H1 (cell line): ENCODE measurements at regions of chr2 and their contacts with region 1.

Region 1: GRCh38 chr2:236180831-236181453 is 12.8 kb upstream of the GBX2 start:
- DNase-seq: peak in 1 of 2 experiments; percentile 84
- H3K4me3 ChIP-seq: no peak overlapping the region
- H3K27ac ChIP-seq: no peak overlapping the region
- H3K4me1 ChIP-seq: peaks cover 0 to 3% (median 0%) of the 10 kb centered on the region in 4 experiments; a peak in 4 of 7 replicates
- H3K27me3 ChIP-seq: peaks cover 13 to 39% (median 31%) of the 10 kb centered on the region in 4 experiments
- CTCF ChIP-seq: peak; percentile 34 to 72 (median 65)
- EP300 ChIP-seq: no peak
- POLR2A ChIP-seq: no peak
- RAD21 ChIP-seq: peak; percentile 88 to 91

Region 2: GRCh38 chr2:235779444-235779896 is 401.5 kb before region 1 on chr2:
- CTCF ChIA-PET with region 1: interaction called, 50 read pairs
- POLR2A ChIA-PET with region 1: no interaction called
- DNase-seq: peak; percentile 71 to 93
- H3K4me3 ChIP-seq: no peak overlapping the region
- H3K27ac ChIP-seq: no peak overlapping the region
- H3K4me1 ChIP-seq: no peaks in the 10 kb centered on the region
- H3K27me3 ChIP-seq: no peaks in the 10 kb centered on the region
- CTCF ChIP-seq: peak; percentile 84 to 95 (median 95)
- EP300 ChIP-seq: no peak
- POLR2A ChIP-seq: no peak
- RAD21 ChIP-seq: peak; percentile 97 to 98

Region 3: GRCh38 chr2:235966396-235966795 is 214.5 kb before region 1 on chr2:
- CTCF ChIA-PET with region 1: interaction called, 10 read pairs
- POLR2A ChIA-PET with region 1: no interaction called
- DNase-seq: no peak
- H3K4me3 ChIP-seq: no peak overlapping the region
- H3K27ac ChIP-seq: no peak overlapping the region
- H3K4me1 ChIP-seq: peaks cover 0 to 2% (median 0%) of the 10 kb centered on the region in 4 experiments; a peak in 2 of 7 replicates
- H3K27me3 ChIP-seq: no peaks in the 10 kb centered on the region
- CTCF ChIP-seq: peak; percentile 36 to 66 (median 55)
- EP300 ChIP-seq: no peak
- POLR2A ChIP-seq: no peak
- RAD21 ChIP-seq: peak; percentile 27 to 55; a peak in 3 of 4 replicates

Region 4: DNA sequence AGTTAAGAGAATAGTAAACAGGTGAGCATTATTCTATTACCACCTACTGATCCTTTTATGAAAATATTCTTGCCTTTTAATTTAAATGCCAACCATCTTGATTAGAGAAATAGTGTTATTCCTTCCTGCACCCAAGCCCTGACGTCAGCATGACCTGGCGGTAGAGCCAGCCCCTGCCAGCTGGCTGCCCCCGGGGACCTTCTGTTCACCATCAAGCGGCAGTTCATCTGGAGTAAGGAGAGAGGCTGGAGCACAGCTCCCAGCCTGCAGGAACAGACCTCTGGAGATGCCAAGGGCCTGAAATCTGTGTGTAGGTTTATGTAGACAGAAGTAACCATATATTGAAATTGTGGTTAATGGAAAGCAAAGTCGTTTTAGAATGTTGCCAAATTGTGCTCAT is 184.5 kb before region 1 on chr2:
- CTCF ChIA-PET with region 1: interaction called, 10 read pairs
- POLR2A ChIA-PET with region 1: no interaction called
- DNase-seq: no peak
- H3K4me3 ChIP-seq: no peak overlapping the region
- H3K27ac ChIP-seq: no peak overlapping the region
- H3K4me1 ChIP-seq: peaks cover 0 to 7% (median 3%) of the 10 kb centered on the region in 4 experiments; a peak in 5 of 7 replicates
- H3K27me3 ChIP-seq: no peaks in the 10 kb centered on the region
- CTCF ChIP-seq: no peak
- EP300 ChIP-seq: no peak
- POLR2A ChIP-seq: no peak
- RAD21 ChIP-seq: no peak

Region 5: GRCh38 chr2:236086971-236087465 is 93.9 kb before region 1 on chr2:
- CTCF ChIA-PET with region 1: interaction called, 34 read pairs
- POLR2A ChIA-PET with region 1: no interaction called
- DNase-seq: peak; percentile 31 to 63
- H3K4me3 ChIP-seq: peak overlapping the region in 1 of 4 experiments; percentile 43; a peak in 2 of 8 replicates
- H3K27ac ChIP-seq: no peak overlapping the region
- H3K4me1 ChIP-seq: peaks cover 7 to 26% (median 22%) of the 10 kb centered on the region in 4 experiments
- H3K27me3 ChIP-seq: no peaks in the 10 kb centered on the region; a peak in 1 of 7 replicates
- CTCF ChIP-seq: no peak
- EP300 ChIP-seq: no peak
- POLR2A ChIP-seq: no peak
- RAD21 ChIP-seq: no peak

Region 6: GRCh38 chr2:236143811-236144210 is 37.1 kb before region 1 on chr2:
- CTCF ChIA-PET with region 1: interaction called, 51 read pairs
- POLR2A ChIA-PET with region 1: interaction called, 5 read pairs
- DNase-seq: no peak
- H3K4me3 ChIP-seq: no peak overlapping the region
- H3K27ac ChIP-seq: no peak overlapping the region
- H3K4me1 ChIP-seq: peaks cover 0 to 5% (median 4%) of the 10 kb centered on the region in 4 experiments; a peak in 5 of 7 replicates
- H3K27me3 ChIP-seq: peaks cover 0 to 6% (median 3%) of the 10 kb centered on the region in 4 experiments; a peak in 6 of 7 replicates
- CTCF ChIP-seq: no peak
- EP300 ChIP-seq: no peak
- POLR2A ChIP-seq: no peak
- RAD21 ChIP-seq: no peak

Region 7: GRCh38 chr2:236168110-236169067 is 12.6 kb before region 1 on chr2 and contains the start of gene GBX2:
- CTCF ChIA-PET with region 1: interaction called, 44 read pairs
- POLR2A ChIA-PET with region 1: interaction called, 7 read pairs
- DNase-seq: peak in 1 of 2 experiments; percentile 87
- H3K4me3 ChIP-seq: peak within 1 kb of the TSS; percentile 11 to 59 (median 26)
- H3K27ac ChIP-seq: no peak within 1 kb of the TSS
- H3K4me1 ChIP-seq: peaks cover 11 to 57% (median 36%) of the 10 kb centered on the region in 4 experiments
- H3K27me3 ChIP-seq: peaks cover 91 to 100% (median 97%) of the 10 kb centered on the region in 4 experiments
- CTCF ChIP-seq: no peak
- EP300 ChIP-seq: no peak
- POLR2A ChIP-seq: peak in 1 of 2 experiments; percentile 38; a peak in 1 of 3 replicates
- RAD21 ChIP-seq: no peak
- total RNA-seq, gene GBX2: 0.89 and 1.2 TPM in 2 replicates

Region 8: DNA sequence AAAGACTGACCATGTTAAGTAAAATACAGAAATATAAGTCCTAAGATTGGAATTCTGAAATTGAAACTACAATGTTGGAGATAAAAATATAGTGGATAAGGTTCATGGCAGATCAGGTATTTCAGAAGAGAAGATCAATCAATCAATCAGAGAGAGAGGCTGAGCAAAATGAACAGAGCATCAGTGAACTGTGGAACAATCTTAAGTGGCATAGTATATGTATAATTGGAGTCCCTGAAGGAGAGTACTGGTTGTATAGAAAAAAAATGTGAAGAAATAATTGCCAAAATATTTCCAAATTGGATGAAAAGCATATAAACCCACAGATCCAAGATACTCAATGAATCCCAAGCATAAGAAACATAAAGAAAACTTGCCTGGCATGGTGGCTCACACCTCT is 48.2 kb after region 1 on chr2:
- CTCF ChIA-PET with region 1: no interaction called
- POLR2A ChIA-PET with region 1: no interaction called
- DNase-seq: no peak
- H3K4me3 ChIP-seq: no peak overlapping the region
- H3K27ac ChIP-seq: no peak overlapping the region
- H3K4me1 ChIP-seq: no peaks in the 10 kb centered on the region
- H3K27me3 ChIP-seq: peaks cover 0 to 2% (median under 1%) of the 10 kb centered on the region in 4 experiments; a peak in 2 of 7 replicates
- CTCF ChIP-seq: no peak
- EP300 ChIP-seq: no peak
- POLR2A ChIP-seq: no peak
- RAD21 ChIP-seq: no peak

Region 9: GRCh38 chr2:236264256-236264655 is 83.3 kb after region 1 on chr2 and contains the start of gene ASB18:
- CTCF ChIA-PET with region 1: no interaction called
- POLR2A ChIA-PET with region 1: no interaction called
- DNase-seq: no peak
- H3K4me3 ChIP-seq: no peak within 1 kb of the TSS
- H3K27ac ChIP-seq: no peak within 1 kb of the TSS
- H3K4me1 ChIP-seq: no peaks in the 10 kb centered on the region
- H3K27me3 ChIP-seq: no peaks in the 10 kb centered on the region; a peak in 2 of 7 replicates
- CTCF ChIP-seq: no peak
- EP300 ChIP-seq: no peak
- POLR2A ChIP-seq: no peak
- RAD21 ChIP-seq: no peak
- total RNA-seq, gene ASB18: not detected in 2 replicates